Left colon (tissue), 2 donors: ENCODE measurements at regions of chr6 and their contacts with region 1.

Region 1: DNA sequence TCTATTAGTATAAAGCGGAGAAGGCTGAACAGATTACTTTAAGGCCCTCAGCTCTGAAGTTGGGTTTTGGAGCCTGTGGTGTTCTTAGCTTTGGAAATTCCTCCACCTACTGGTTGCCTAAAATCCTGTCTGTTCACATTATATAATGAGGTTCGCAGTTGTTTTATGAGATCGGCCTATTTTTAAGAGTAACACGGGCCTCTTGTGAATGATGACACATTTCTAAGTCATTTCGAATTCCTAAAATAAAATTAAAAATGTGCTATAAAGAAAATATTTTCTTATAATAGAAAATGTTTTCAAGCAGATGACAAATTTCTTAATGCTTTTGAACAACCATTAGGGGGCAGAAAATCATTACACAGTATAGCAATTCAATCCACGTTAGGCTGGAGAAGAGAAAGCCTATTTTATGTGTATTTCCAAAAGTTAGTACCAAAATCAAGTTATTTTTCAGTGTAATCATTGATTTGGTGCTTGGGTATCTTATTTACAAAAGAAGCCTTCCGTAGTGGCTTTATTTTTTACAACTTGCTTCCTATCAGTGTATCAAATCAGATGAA is 15.8 kb upstream of the FAM8A1 start:
- DNase-seq: no peak
- ATAC-seq: peak; percentile 44

Region 2: DNA sequence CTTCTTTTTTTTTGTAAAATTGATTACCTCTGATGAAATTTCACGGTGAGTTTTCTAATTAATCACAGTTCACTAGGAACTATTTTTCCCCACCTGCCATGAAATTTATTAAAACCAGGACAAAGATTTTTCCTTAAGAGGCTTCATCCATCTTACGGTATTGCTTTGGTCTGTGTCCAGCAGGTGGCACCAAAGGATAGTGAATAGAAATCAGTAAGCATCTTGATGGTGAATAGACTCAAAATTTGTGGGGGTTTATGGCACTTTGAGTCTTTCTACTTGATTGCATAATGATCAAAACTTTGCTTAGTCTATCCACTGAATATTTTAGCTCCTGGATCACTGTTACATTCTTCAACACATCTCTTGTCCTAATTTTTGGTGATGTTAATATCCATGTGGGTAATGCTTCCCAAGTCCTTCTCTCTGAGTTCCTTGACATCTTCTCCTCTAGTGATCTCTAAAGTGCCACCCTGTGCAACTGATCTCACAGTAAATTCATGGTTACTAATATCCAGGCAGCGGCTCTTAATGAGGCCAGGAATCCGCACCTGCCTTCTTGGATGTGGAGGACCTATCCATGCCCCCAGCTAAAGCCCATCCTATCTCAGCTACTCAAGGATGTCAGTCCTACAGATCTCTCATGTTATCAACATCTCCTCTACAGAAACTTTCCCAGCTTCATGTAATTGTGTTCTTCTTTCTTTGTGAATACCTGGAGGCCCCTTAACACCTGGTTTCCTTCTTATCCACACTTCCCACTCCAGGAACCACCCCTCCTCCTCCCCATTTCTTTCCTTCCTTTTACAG is 428.0 kb before region 1 on chr6:
- intact Hi-C with region 1: loop called in 1 of 2 experiments (anchors 2 kb)
- DNase-seq: peak in 1 of 2 donors; percentile 81
- ATAC-seq: peak; percentile 31

Region 3: GRCh38 chr6:17281100-17281494 is 303.2 kb before region 1 on chr6 and contains the start of gene RBM24:
- intact Hi-C with region 1: loop called in 1 of 2 experiments (anchors 5 kb)
- DNase-seq: peak; percentile 75 to 80
- ATAC-seq: peak; percentile 80
- total RNA-seq, gene RBM24: 3.2 to 8.8 TPM

Region 4: GRCh38 chr6:17469006-17469832 is 115.1 kb before region 1 on chr6:
- intact Hi-C with region 1: loop called in 1 of 2 experiments (anchors 10 kb)
- DNase-seq: no peak
- ATAC-seq: no peak